Activated B cell treated with CpG ODN at 0.5 μM for 24 hours (primary cell): ENCODE measurements at regions of chr20 and their contacts with region 1.

Region 1: DNA sequence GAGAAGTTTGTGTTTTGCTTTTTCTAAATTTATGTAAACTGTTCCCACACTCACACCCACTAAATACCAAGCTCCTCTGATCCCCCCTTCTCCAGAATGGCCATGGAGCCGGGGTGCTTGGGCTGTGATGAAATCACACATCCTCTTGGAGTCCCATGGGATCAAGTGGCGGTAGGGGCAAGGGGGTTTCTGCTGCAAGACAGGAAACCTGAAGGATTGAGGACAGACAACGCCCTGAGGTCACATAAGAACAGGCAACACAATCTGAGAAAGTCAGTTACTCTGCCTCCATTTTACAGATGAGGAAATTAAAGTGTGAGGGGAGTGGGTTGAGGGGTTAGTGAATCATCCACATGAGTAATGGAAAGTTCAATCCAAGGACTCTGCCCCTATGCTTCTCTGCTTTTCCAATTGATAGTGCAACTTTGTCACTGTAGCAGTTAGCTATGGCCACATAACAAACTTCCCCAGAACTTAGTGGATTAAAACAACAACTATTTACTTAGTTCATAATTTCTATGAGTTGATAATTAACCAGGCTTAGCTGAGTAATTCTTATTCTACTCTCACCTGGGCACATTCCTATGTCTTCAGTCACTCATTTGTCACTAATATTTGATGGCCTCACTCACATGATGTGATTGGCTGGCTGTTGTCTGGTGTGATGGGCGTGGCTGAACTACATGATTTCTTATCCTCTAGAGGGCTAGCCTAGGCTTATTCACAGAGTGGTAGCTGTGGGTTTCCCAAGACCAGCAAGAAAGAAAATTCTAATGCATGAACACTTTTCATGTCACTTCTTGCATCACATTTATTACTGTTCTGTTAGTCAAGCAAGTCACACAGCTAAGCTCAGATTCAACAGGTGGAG is 311.1 kb upstream of the RNF24 start:
- DNase-seq: no peak
- ATAC-seq: peak; percentile 52
- H3K4me3 Mint-ChIP-seq: no peak overlapping the region
- H3K27ac Mint-ChIP-seq: no peak overlapping the region
- H3K4me1 Mint-ChIP-seq: peaks cover 18% of the 10 kb centered on the region
- H3K27me3 Mint-ChIP-seq: no peaks in the 10 kb centered on the region
- CTCF ChIP-seq: no peak

Region 2: DNA sequence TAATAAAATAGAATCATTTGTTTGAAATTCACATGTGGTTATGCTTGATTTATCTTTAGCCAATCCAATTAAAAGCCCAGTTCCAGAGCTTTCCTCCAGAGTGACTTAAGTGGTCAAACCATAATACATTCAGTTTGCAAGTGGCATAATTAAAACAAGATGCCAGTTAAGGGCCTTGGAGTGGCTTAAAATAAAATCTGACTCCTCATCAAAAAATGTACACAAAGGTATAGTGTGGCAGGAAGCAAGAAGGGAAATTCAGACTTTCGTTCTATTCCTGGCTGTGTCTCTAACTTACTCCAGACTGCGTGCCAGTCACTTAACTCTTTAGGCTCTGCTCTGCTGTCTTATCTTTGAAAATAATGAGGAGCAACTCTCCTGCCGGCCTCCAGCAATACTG is 143.9 kb after region 1 on chr20:
- CTCF ChIA-PET with region 1: no interaction called
- POLR2A ChIA-PET with region 1: no interaction called
- intact Hi-C with region 1: no loop called
- DNase-seq: no peak
- ATAC-seq: no peak
- H3K4me3 Mint-ChIP-seq: no peak overlapping the region
- H3K27ac Mint-ChIP-seq: no peak overlapping the region
- H3K4me1 Mint-ChIP-seq: no peaks in the 10 kb centered on the region
- H3K27me3 Mint-ChIP-seq: peaks cover 12% of the 10 kb centered on the region
- CTCF ChIP-seq: no peak

Region 3: DNA sequence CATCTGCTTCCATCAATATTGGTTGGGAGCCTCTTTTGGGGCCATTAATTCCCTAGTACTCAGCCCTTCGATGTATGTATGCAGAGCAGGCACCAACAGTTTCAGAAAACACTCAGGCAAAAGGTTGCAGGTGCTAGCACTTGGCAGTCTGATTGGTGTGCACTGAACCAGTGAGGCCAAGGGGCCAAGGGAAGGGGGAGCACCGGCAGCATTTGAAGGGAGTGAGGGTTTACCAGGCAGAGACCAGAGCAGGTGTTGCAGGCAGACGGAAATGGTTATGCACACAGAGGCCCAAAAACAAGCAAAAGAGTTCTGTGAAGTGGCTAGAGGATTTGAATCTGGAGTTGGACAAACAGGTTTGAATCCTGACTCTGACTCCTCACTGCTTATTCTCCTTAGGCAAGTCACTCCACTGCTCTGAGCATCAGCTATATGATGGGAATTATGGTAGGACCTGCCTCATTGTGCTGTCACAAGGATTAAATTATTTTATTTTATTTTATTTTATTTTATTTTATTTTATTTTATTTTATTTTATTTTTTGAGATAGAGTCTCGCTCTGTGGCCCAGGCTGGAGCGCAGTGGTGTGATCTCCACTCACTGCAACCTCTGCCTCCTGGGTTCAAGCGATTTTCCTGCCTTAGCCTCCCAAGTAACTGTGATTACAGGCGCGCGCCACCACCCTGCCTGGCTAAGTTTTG is 1365.6 kb after region 1 on chr20:
- CTCF ChIA-PET with region 1: no interaction called
- POLR2A ChIA-PET with region 1: interaction called, 11 read pairs
- intact Hi-C with region 1: no loop called
- DNase-seq: peak; percentile 35
- ATAC-seq: peak; percentile 99
- H3K4me3 Mint-ChIP-seq: peak overlapping the region; percentile 33
- H3K27ac Mint-ChIP-seq: peak overlapping the region; percentile 13
- H3K4me1 Mint-ChIP-seq: peaks cover 22% of the 10 kb centered on the region
- H3K27me3 Mint-ChIP-seq: no peaks in the 10 kb centered on the region
- CTCF ChIP-seq: no peak